H1 (cell line): ENCODE measurements at regions of chr3 and their contacts with region 1.

Region 1: GRCh38 chr3:142976621-142977398 is 13.3 kb upstream of the PAQR9 start:
- DNase-seq: no peak
- H3K4me3 ChIP-seq: no peak overlapping the region
- H3K27ac ChIP-seq: no peak overlapping the region
- H3K4me1 ChIP-seq: no peaks in the 10 kb centered on the region
- H3K27me3 ChIP-seq: no peaks in the 10 kb centered on the region
- CTCF ChIP-seq: no peak
- EP300 ChIP-seq: no peak
- POLR2A ChIP-seq: no peak
- RAD21 ChIP-seq: no peak

Region 2: GRCh38 chr3:142228940-142229339 is 747.9 kb before region 1 on chr3:
- CTCF ChIA-PET with region 1: no interaction called
- POLR2A ChIA-PET with region 1: no interaction called
- DNase-seq: no peak
- H3K4me3 ChIP-seq: no peak overlapping the region
- H3K27ac ChIP-seq: no peak overlapping the region
- H3K4me1 ChIP-seq: peaks cover 0 to 3% (median 0%) of the 10 kb centered on the region in 4 experiments; a peak in 1 of 7 replicates
- H3K27me3 ChIP-seq: peaks cover 0 to 1% (median 0%) of the 10 kb centered on the region in 4 experiments; a peak in 1 of 7 replicates
- CTCF ChIP-seq: no peak
- EP300 ChIP-seq: no peak
- POLR2A ChIP-seq: no peak
- RAD21 ChIP-seq: no peak

Region 3: GRCh38 chr3:142929109-142929508 is 47.7 kb before region 1 on chr3:
- CTCF ChIA-PET with region 1: interaction called, 51 read pairs
- POLR2A ChIA-PET with region 1: no interaction called
- DNase-seq: peak in 1 of 2 experiments; percentile 70
- H3K4me3 ChIP-seq: no peak overlapping the region
- H3K27ac ChIP-seq: no peak overlapping the region
- H3K4me1 ChIP-seq: no peaks in the 10 kb centered on the region
- H3K27me3 ChIP-seq: no peaks in the 10 kb centered on the region
- CTCF ChIP-seq: peak; percentile 74 to 78 (median 77)
- EP300 ChIP-seq: no peak
- POLR2A ChIP-seq: no peak
- RAD21 ChIP-seq: peak; percentile 57 to 72

Region 4: DNA sequence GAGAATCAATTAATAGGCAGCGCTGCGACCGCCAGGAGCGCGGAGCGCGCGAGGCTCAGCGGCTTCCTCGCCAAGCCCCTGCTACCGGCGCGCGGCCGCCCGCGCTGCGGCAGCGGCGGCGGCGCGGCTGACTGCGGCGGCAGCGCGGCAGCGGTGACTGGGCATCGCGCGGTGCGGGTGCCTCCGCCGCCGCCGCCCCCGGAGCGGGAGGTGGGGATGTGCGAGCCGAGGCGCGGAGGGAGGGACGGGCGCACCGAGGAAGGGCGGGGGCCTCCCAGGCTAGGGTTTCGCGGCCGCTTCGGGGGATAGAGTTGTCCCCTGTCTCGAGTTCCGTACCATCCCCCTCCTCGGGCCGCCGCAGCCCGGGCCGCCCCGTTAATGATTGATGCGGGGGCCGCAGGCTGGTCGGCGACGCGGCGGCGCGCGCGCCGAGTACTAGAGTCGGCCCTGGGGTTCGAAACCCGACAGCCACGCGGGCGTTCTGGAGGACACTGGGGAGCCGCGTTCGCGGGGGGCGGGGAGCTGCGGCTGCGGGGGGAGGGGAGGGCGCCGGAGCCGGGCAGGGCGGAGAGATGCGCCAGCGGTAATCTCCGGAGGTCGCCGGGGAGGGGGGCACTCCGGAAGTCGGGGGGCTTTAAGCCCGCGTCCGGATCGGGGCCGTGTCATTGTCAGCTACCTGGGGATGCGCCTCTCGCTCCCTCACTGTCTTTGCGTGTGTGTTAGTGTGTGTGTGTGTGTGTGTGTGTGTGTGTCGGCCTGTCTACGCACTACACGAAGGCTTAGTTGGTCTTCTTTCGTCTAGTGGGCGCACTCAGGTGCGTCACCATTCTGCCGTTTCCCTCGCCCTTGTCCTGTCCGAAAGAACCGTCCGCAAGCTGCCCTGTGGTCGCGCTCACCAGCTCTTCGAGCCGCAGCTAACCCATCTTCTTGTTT is 13.0 kb before region 1 on chr3 and contains the start of gene PAQR9:
- CTCF ChIA-PET with region 1: interaction called, 12 read pairs
- POLR2A ChIA-PET with region 1: interaction called, 6 read pairs
- DNase-seq: peak in 1 of 2 experiments; percentile 83
- H3K4me3 ChIP-seq: peak within 1 kb of the TSS; percentile 75 to 92 (median 84)
- H3K27ac ChIP-seq: no peak within 1 kb of the TSS
- H3K4me1 ChIP-seq: peaks cover 0 to 10% (median 6%) of the 10 kb centered on the region in 4 experiments; a peak in 5 of 7 replicates
- H3K27me3 ChIP-seq: peaks cover 5 to 29% (median 23%) of the 10 kb centered on the region in 4 experiments
- CTCF ChIP-seq: no peak
- EP300 ChIP-seq: peak in 1 of 2 experiments; percentile 50; a peak in 1 of 3 replicates
- POLR2A ChIP-seq: peak in 1 of 2 experiments; percentile 46; a peak in 1 of 3 replicates
- RAD21 ChIP-seq: no peak
- total RNA-seq, gene PAQR9: 2.6 and 2.7 TPM in 2 replicates

Region 5: GRCh38 chr3:142993958-142994442 is 17.2 kb after region 1 on chr3:
- CTCF ChIA-PET with region 1: interaction called, 12 read pairs
- POLR2A ChIA-PET with region 1: no interaction called
- DNase-seq: peak in 1 of 2 experiments; percentile 67
- H3K4me3 ChIP-seq: no peak overlapping the region
- H3K27ac ChIP-seq: no peak overlapping the region
- H3K4me1 ChIP-seq: no peaks in the 10 kb centered on the region
- H3K27me3 ChIP-seq: no peaks in the 10 kb centered on the region
- CTCF ChIP-seq: peak; percentile 10 to 77 (median 77)
- EP300 ChIP-seq: no peak
- POLR2A ChIP-seq: no peak
- RAD21 ChIP-seq: peak; percentile 81 to 89